H1 (cell line): ENCODE measurements at regions of chr2 and their contacts with region 1.

Region 1: DNA sequence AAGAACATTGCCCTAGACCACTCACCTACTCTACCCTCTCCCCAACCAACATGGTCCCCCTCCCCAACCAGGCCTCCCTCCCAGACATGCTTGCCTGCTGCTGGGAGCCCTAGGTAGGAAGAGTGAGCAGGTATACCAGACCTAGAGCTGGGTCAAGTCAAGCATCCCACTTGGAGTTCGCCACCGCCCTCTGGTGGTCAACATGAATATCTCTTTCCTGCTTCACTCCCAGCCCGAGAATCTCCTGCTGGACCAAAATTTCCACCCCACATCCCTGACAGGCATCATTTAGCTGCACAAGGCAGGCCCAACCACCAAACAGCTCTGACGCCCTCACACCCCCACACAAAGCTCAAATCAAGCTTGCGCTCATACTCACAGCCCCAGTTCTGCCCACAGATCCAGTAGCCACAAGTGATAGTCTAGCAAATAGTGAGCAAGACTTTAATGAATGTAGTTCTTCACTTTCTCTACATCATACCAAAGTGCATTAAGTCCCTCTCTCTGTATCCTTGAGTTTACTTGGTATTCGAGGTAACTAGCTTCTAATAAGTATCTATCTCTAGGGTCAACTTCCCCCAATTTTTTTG is 116.0 kb downstream of the TNS1 start:
- DNase-seq: peak; percentile 47 to 92
- H3K4me3 ChIP-seq: no peak overlapping the region
- H3K27ac ChIP-seq: no peak overlapping the region
- H3K4me1 ChIP-seq: no peaks in the 10 kb centered on the region
- H3K27me3 ChIP-seq: no peaks in the 10 kb centered on the region
- CTCF ChIP-seq: peak; percentile 88 to 95 (median 94)
- EP300 ChIP-seq: no peak
- POLR2A ChIP-seq: no peak
- RAD21 ChIP-seq: peak; percentile 90

Region 2: GRCh38 chr2:217695033-217695520 is 191.7 kb before region 1 on chr2:
- CTCF ChIA-PET with region 1: no interaction called
- POLR2A ChIA-PET with region 1: no interaction called
- DNase-seq: no peak
- H3K4me3 ChIP-seq: no peak overlapping the region
- H3K27ac ChIP-seq: no peak overlapping the region
- H3K4me1 ChIP-seq: no peaks in the 10 kb centered on the region
- H3K27me3 ChIP-seq: no peaks in the 10 kb centered on the region
- CTCF ChIP-seq: no peak
- EP300 ChIP-seq: no peak
- POLR2A ChIP-seq: no peak
- RAD21 ChIP-seq: no peak

Region 3: GRCh38 chr2:217822296-217823252 is 64.2 kb before region 1 on chr2:
- CTCF ChIA-PET with region 1: interaction called, 10 read pairs
- POLR2A ChIA-PET with region 1: no interaction called
- DNase-seq: no peak
- H3K4me3 ChIP-seq: no peak overlapping the region
- H3K27ac ChIP-seq: no peak overlapping the region
- H3K4me1 ChIP-seq: peaks cover 0 to 3% (median under 1%) of the 10 kb centered on the region in 4 experiments; a peak in 1 of 7 replicates
- H3K27me3 ChIP-seq: no peaks in the 10 kb centered on the region
- CTCF ChIP-seq: peak; percentile 36 to 45 (median 40)
- EP300 ChIP-seq: no peak
- POLR2A ChIP-seq: no peak
- RAD21 ChIP-seq: no peak; a peak in 1 of 4 replicates

Region 4: DNA sequence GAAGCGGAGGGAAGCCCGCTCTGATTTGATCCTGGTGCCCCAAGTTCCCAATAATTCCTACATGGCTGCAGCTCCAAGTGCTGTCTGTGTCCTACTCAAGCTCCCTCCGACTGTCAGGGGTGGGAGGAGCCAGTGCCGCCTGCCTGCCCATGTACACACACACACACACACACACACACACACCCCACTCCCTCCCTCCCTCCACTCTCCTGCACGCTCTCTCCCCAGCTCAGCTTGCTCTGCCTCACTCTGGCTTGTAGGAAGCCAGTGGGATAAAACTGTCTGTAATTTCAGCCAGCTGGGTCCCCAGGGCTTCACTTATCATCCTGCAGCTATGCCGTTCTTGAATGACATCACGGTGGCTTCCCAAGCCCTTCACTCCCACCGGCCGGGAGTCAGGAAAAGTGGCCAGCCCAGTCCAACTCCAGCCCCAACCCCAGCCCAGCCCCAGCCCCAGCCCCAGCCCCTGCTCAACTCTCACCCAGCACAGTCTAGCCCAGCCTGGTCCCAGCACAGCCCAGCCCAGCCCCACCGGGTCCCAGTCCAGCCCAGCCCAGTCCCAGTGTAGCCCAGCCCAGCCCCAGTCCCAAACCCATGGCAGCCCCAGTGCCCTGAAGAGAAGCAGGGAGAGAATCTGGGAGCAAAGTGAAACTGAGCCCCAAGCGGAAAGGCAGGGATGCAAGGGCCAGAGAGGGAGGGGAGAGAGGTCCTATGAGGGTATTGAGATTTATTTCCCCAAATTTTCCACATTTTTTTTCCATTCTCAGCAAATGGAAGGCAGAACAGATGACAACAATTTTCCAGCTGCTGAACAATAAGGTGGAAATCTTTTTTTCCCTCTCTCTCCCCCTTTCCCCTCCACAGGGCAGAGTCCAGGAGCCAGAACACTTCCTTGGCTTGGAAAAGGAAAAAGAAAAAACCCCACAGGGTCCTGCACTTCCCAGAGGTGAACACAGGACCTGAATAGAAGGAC is 28.0 kb before region 1 on chr2:
- CTCF ChIA-PET with region 1: interaction called, 20 read pairs
- POLR2A ChIA-PET with region 1: no interaction called
- DNase-seq: no peak
- H3K4me3 ChIP-seq: no peak overlapping the region
- H3K27ac ChIP-seq: no peak overlapping the region
- H3K4me1 ChIP-seq: peaks cover 0 to 18% (median 2%) of the 10 kb centered on the region in 4 experiments; a peak in 5 of 7 replicates
- H3K27me3 ChIP-seq: no peaks in the 10 kb centered on the region
- CTCF ChIP-seq: no peak
- EP300 ChIP-seq: no peak
- POLR2A ChIP-seq: no peak
- RAD21 ChIP-seq: no peak

Region 5: GRCh38 chr2:217918308-217919024 is 31.7 kb after region 1 on chr2:
- CTCF ChIA-PET with region 1: interaction called, 26 read pairs
- POLR2A ChIA-PET with region 1: interaction called, 3 read pairs
- DNase-seq: no peak
- H3K4me3 ChIP-seq: no peak overlapping the region
- H3K27ac ChIP-seq: no peak overlapping the region
- H3K4me1 ChIP-seq: peaks cover 9 to 48% (median 33%) of the 10 kb centered on the region in 4 experiments
- H3K27me3 ChIP-seq: peaks cover 0 to 4% (median 0%) of the 10 kb centered on the region in 4 experiments; a peak in 3 of 7 replicates
- CTCF ChIP-seq: peak; percentile 53 to 63 (median 55)
- EP300 ChIP-seq: no peak
- POLR2A ChIP-seq: no peak
- RAD21 ChIP-seq: peak in 1 of 2 experiments; percentile 45; a peak in 3 of 4 replicates

Region 6: DNA sequence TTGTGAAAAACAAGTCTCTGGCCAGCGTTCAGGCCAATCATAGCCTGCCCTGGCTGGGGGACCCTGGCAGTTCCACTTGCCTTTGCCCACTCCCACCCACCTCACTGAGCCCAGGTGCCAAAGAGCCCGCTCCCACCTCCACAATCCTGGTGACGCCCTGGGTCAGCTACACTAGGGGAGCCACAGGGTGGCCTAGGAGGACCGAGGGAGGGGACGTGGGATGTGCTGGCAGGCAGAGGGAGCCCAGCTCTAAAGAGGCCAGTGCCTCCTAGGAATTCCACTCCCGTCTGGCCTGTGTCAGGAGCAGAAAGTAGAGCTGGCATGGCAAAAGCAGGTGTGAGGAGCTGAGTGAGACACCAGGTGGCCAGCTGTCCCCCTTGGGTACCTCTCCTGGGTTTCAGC is 66.7 kb after region 1 on chr2:
- CTCF ChIA-PET with region 1: interaction called, 14 read pairs
- POLR2A ChIA-PET with region 1: no interaction called
- DNase-seq: no peak
- H3K4me3 ChIP-seq: no peak overlapping the region
- H3K27ac ChIP-seq: no peak overlapping the region
- H3K4me1 ChIP-seq: peaks cover 0 to 10% (median 3%) of the 10 kb centered on the region in 4 experiments; a peak in 6 of 7 replicates
- H3K27me3 ChIP-seq: peaks cover 0 to 3% (median 0%) of the 10 kb centered on the region in 4 experiments; a peak in 1 of 7 replicates
- CTCF ChIP-seq: no peak
- EP300 ChIP-seq: no peak
- POLR2A ChIP-seq: no peak
- RAD21 ChIP-seq: no peak